AG04450 (cell line): ENCODE measurements at regions of chr2 and their contacts with region 1.

Region 1: DNA sequence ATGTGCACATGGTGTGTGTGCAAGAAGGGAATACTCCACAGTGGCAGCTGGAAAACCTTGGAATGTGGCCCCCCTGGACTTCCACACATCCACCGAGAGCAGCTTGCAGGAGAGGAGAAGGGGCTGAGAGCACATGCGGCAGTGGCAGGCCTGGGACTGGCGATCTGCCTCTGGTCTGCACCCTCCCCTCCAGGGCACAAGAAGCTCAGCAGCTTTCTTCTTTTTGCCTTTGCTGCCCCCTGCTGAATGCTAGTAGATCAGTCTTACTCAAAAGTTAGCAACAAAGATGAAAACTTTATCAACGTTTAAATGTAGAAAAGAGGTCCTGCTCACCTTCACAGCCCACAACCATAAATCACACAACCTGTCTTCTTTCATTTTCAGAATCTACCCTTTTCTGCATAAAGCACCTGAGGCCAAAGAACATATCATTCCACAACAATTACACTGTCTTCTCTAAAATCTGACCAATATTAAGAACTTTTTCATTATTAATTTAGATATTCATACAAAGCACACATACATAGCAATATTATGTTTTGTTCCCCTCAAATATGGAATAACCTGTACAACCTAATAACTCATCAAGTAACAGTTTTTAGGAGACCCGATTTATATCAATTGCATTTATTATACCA is 34.6 kb downstream of the TGFBRAP1 start:
- DNase-seq: peak; percentile 34
- H3K4me3 ChIP-seq: no peak overlapping the region
- H3K27ac ChIP-seq: no peak overlapping the region
- H3K27me3 ChIP-seq: no peaks in the 10 kb centered on the region
- CTCF ChIP-seq: peak; percentile 80

Region 2: GRCh38 chr2:104853926-104854497 is 441.0 kb before region 1 on chr2 and contains the start of gene POU3F3:
- CTCF ChIA-PET with region 1: no interaction called
- POLR2A ChIA-PET with region 1: no interaction called
- DNase-seq: no peak
- H3K4me3 ChIP-seq: no peak within 1 kb of the TSS
- H3K27ac ChIP-seq: no peak within 1 kb of the TSS
- H3K27me3 ChIP-seq: peaks cover 58% of the 10 kb centered on the region
- CTCF ChIP-seq: no peak
- polyA plus RNA-seq, gene POU3F3: not detected in 2 replicates

Region 3: GRCh38 chr2:105114551-105114950 is 180.4 kb before region 1 on chr2:
- CTCF ChIA-PET with region 1: interaction called, 110 read pairs
- POLR2A ChIA-PET with region 1: no interaction called
- DNase-seq: peak; percentile 48
- H3K4me3 ChIP-seq: no peak overlapping the region
- H3K27ac ChIP-seq: no peak overlapping the region
- H3K27me3 ChIP-seq: peaks cover 5% of the 10 kb centered on the region
- CTCF ChIP-seq: peak; percentile 77

Region 4: DNA sequence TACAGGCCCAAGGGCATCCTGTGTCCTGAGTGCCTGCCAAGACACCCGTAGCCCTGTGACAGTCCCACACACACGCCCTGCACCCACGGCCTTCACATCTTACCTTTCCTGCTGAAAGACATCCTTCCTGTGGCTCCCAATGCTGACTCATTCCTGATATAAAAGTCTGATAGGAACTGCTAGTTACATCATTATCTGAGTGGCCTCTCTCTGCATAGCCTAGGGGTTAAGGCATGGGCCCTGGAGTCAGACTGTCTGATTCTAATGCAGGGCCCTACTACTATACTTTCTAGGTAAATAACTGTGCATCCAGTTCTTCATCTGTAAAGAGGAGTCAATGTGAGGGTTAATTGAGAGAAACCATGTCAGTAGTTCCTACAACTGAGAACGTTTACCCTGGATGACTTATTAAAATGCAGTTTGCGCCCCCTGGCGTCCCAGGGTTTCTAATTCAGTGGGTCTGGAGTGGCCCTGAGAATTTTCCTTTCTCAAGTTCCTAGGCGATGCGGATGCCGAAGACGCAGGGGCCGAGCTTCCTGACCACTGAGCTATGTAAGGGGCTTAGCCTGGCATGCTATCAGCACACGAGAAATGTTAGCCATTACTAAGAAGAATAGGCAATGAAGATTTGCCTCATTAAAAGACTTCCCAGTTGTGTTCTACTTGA is 59.4 kb before region 1 on chr2:
- CTCF ChIA-PET with region 1: interaction called, 10 read pairs
- POLR2A ChIA-PET with region 1: no interaction called
- DNase-seq: peak; percentile 49
- H3K4me3 ChIP-seq: no peak overlapping the region
- H3K27ac ChIP-seq: no peak overlapping the region
- H3K27me3 ChIP-seq: peaks cover 5% of the 10 kb centered on the region
- CTCF ChIP-seq: peak; percentile 81

Region 5: DNA sequence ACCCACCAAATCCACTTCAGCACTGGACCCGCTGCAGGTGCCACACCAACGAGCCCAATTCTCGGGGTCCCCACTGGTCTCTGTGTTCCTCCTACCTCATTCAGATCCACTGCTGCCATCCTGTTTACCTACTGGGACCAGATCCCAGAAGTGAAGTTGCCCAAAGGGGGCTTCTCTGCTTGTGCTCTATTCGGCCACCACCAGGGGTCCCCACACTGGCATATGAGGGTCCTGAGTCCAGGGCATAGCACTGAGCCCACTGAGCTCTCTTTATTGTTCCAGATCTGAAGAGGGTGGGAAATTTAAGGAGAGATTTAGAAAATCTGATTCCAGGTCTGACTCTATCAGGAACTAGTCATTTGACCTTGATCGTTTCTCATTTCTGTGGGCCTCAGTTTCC is 51.0 kb before region 1 on chr2:
- CTCF ChIA-PET with region 1: interaction called, 10 read pairs
- POLR2A ChIA-PET with region 1: no interaction called
- DNase-seq: no peak
- H3K4me3 ChIP-seq: no peak overlapping the region
- H3K27ac ChIP-seq: no peak overlapping the region
- H3K27me3 ChIP-seq: peaks cover 11% of the 10 kb centered on the region
- CTCF ChIP-seq: peak; percentile 42

Region 6: DNA sequence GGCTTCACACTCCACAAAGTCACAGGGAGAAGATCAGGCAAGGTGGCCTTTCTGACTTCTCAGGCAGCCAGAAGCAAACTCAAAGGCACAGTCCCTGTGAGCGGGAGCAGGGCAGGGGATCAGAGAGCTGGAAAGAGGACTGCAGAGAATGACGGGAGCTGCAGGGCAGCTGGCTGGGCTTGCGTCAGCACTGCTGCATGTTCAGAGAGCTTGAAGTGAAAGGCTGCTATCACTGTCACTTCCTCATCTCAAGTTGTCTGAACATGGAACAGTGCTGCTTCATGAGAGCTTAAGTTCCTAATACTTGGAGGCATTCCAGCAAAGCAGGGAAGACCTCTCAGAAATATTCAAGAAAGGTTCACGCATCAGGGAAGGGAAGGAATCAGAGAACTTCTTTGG is 14.2 kb after region 1 on chr2:
- CTCF ChIA-PET with region 1: interaction called, 20 read pairs
- POLR2A ChIA-PET with region 1: no interaction called
- DNase-seq: no peak
- H3K4me3 ChIP-seq: no peak overlapping the region
- H3K27ac ChIP-seq: no peak overlapping the region
- H3K27me3 ChIP-seq: no peaks in the 10 kb centered on the region
- CTCF ChIP-seq: no peak

Region 7: DNA sequence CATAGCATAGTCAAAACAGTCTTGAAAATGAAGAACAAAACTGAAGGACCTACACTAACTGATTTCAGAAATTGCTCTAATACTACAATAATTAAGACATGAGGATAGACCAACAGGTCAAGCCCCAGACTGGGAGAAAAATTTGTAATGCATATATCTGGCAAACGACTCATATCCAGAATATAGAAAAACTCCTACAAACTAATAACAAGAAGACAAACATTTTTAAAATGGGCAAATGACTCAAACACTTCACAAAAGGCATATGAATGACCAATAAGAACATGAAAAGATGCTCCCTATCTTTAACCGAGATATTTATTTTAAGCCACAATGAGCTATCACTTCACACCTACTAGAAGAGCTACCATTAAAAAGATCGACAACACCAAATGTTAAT is 20.4 kb after region 1 on chr2:
- CTCF ChIA-PET with region 1: interaction called, 20 read pairs
- POLR2A ChIA-PET with region 1: no interaction called
- DNase-seq: no peak
- H3K4me3 ChIP-seq: no peak overlapping the region
- H3K27ac ChIP-seq: no peak overlapping the region
- H3K27me3 ChIP-seq: no peaks in the 10 kb centered on the region
- CTCF ChIP-seq: no peak